ENCODE measurements at regions of chr9 and their contacts with region 1.

Region 1: GRCh38 chr9:121686930-121687541 is 35.6 kb downstream of the DAB2IP start:
- DNase-seq: peak; percentile 51 to 78
- ATAC-seq: peak; percentile 56 to 80 (median 68)
- H3K4me3 ChIP-seq: no peak overlapping the region
- H3K27ac ChIP-seq: peak overlapping the region in 4 of 10 donors; percentile 9 to 24 (median 16)
- H3K4me1 ChIP-seq: peaks cover 12 to 73% (median 35%) of the 10 kb centered on the region in 9 donors
- H3K27me3 ChIP-seq: no peaks in the 10 kb centered on the region
- CTCF ChIP-seq: peak; percentile 73 to 90 (median 84)

Region 2: GRCh38 chr9:121634329-121635261 is 52.4 kb before region 1 on chr9:
- intact Hi-C with region 1: loop called in 1 of 10 experiments (anchors 5 kb)
- DNase-seq: no peak
- ATAC-seq: peak; percentile 61 to 80 (median 74)
- H3K4me3 ChIP-seq: no peak overlapping the region
- H3K27ac ChIP-seq: peak overlapping the region in 5 of 10 donors; percentile 15 to 70 (median 51)
- H3K4me1 ChIP-seq: peaks cover 17 to 69% (median 47%) of the 10 kb centered on the region in 9 donors
- H3K27me3 ChIP-seq: no peaks in the 10 kb centered on the region
- CTCF ChIP-seq: peak; percentile 43 to 75 (median 60)

Region 3: DNA sequence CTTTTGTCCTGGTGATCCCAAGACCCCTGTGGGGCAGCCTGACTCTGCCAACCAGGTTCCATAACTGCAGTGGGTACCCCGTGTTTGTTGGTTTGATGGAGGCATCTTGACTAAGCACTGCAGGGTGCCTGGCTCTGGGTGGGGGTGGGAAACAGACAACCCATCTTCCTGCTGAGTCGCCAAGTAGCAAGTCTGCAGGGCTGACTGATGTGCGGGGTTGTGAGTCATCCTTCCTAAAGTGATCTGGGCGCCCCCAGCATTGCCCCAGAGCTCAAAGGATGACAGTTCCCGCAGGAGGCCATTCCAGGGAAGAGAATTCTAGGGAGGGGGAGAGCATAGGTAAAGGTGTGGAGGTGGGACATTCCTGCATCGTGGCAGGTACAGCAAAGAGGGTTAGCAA is 12.1 kb before region 1 on chr9:
- intact Hi-C with region 1: loop called in 1 of 10 experiments (anchors 1 kb)
- DNase-seq: no peak
- ATAC-seq: no peak
- H3K4me3 ChIP-seq: no peak overlapping the region
- H3K27ac ChIP-seq: no peak overlapping the region
- H3K4me1 ChIP-seq: peaks cover 22 to 76% (median 58%) of the 10 kb centered on the region in 9 donors
- H3K27me3 ChIP-seq: no peaks in the 10 kb centered on the region
- CTCF ChIP-seq: no peak

Region 4: GRCh38 chr9:121807823-121808278 is 120.8 kb after region 1 on chr9:
- intact Hi-C with region 1: no loop called
- DNase-seq: no peak
- ATAC-seq: peak in 2 of 8 donors; percentile 19 to 34
- H3K4me3 ChIP-seq: no peak overlapping the region
- H3K27ac ChIP-seq: no peak overlapping the region
- H3K4me1 ChIP-seq: no peaks in the 10 kb centered on the region
- H3K27me3 ChIP-seq: no peaks in the 10 kb centered on the region
- CTCF ChIP-seq: peak in 1 of 9 donors; percentile 20

Region 5: DNA sequence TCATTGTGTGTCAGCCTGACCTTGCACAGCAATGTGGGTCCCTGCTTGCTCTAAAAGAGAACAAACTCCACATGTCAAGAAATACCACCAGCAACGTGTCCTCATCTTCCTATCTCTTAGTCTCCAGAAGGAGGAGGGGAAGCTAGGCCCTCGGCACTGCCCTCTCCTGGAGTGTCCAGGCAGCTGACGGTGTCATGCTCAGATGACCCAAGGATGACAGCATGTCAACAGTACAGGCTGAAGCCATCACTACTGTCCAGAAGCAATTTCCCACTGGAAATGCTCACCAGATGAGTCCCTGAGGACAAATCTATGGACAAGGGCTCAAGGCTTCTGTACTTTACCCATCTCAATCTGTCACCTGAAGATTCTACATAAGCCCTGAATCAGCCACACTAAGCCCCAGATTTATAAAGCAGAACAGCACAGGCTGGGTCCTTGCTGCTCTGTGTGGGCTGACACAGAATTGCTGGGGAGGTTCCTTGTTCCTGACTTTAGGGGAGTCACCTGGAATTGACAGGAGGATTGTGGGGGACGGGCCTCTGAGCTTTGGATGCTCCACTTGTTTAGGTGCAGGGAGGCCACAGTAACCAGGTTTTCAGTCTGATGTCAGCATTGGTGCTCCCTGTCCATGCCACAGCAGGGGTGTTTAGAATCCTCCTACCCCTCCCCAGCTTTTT is 174.6 kb after region 1 on chr9:
- intact Hi-C with region 1: loop called in 5 of 10 experiments (anchors 2 to 10 kb)
- DNase-seq: peak; percentile 49 to 50
- ATAC-seq: peak in 7 of 8 donors; percentile 77 to 93 (median 79)
- H3K4me3 ChIP-seq: no peak overlapping the region
- H3K27ac ChIP-seq: no peak overlapping the region
- H3K4me1 ChIP-seq: peaks cover 0 to 20% (median 13%) of the 10 kb centered on the region in 9 donors
- H3K27me3 ChIP-seq: no peaks in the 10 kb centered on the region
- CTCF ChIP-seq: peak; percentile 27 to 74 (median 64)

Region 6: DNA sequence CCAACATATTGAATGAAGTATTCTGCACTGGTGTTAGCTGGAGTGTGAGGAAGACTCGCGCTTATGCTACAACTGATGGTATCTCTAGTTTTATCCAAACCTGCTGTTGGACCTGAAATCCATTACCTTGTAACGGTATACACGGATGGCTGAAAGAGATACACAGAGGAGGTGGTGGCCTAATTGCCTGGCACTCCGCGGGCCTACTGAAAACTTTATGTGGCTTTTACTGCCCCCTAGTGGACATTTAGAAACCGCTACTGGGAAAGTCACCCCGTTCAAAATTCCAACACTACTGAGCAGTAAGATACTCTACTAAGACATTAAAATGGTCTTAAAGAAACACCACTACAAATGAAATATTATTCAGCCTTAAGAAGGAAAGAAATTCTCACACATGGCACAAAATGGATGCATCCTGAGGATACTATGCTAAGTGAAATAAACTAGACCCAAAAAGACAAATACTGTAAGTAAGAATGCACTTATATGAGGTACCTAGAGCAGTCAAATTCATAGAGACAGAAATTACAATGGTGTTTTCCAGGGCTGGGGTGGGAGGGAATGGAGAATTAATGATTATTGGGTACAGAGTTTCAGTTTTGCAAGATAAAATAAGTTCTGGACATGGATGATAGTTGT is 305.7 kb after region 1 on chr9:
- intact Hi-C with region 1: loop called in 9 of 10 experiments (anchors 1 to 5 kb)
- DNase-seq: peak; percentile 34 to 67
- ATAC-seq: peak; percentile 46 to 82 (median 78)
- H3K4me3 ChIP-seq: no peak overlapping the region
- H3K27ac ChIP-seq: no peak overlapping the region
- H3K4me1 ChIP-seq: peaks cover 0 to 28% (median 6%) of the 10 kb centered on the region in 9 donors
- H3K27me3 ChIP-seq: no peaks in the 10 kb centered on the region
- CTCF ChIP-seq: peak; percentile 80 to 91 (median 85)

Region 7: GRCh38 chr9:122190609-122191381 is 503.8 kb after region 1 on chr9:
- intact Hi-C with region 1: no loop called
- DNase-seq: no peak
- ATAC-seq: peak in 2 of 8 donors; percentile 36 to 46
- H3K4me3 ChIP-seq: no peak overlapping the region
- H3K27ac ChIP-seq: no peak overlapping the region
- H3K4me1 ChIP-seq: no peaks in the 10 kb centered on the region
- H3K27me3 ChIP-seq: peaks cover 0 to 9% (median 3%) of the 10 kb centered on the region in 7 donors
- CTCF ChIP-seq: no peak